Activated CD8-positive, alpha-beta memory T cell treated with anti-CD3 and anti-CD28 coated beads, Interleukin-2, amount 10 ng/mL, durations not matched to agents 7 days and 5 days (primary cell): ENCODE measurements at regions of chr3 and their contacts with region 1.

Region 1: GRCh38 chr3:58491506-58492402 is at the start of gene KCTD6:
- DNase-seq: peak; percentile 90
- ATAC-seq: peak; percentile 91
- H3K4me3 Mint-ChIP-seq: peak within 1 kb of the TSS; percentile 84
- H3K27ac Mint-ChIP-seq: peak within 1 kb of the TSS; percentile 81
- H3K4me1 Mint-ChIP-seq: peaks cover 33% of the 10 kb centered on the region
- H3K27me3 Mint-ChIP-seq: peaks cover 47% of the 10 kb centered on the region
- total RNA-seq, gene KCTD6: 6.4 to 7.0 TPM

Region 2: DNA sequence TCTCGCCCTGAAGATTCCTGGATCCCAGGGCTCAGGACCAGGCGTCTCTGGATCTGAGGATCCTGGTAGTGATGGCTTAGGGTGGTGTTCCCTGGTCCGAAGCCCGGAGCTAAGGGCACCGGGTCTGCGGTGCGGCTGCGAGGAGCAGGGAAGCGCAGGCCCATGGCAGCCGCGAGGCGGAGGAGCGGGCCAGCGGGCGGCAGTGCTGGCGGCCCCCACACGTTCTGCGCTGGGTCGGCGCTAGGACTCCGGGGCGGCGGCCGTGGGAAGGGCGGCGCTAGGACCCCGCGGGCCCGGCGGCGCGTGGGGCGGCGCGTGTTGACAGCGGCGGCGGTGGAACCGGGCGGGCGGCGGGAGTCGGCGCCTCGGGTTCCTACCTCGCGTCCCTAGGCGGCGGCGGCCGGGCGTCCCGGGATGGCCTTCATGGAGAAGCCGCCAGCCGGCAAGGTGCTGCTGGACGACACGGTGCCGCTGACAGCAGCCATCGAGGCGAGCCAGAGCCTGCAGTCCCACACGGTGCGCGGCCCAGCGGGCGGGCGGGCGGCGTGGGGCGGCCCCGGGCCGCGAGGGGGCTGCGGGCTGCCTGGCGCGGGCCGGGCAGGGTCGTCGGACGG is 159.1 kb before region 1 on chr3 and contains the start of gene PXK:
- CTCF ChIA-PET with region 1: interaction called, 33 read pairs
- DNase-seq: peak; percentile 84
- ATAC-seq: peak; percentile 89
- H3K4me3 Mint-ChIP-seq: peak within 1 kb of the TSS; percentile 95
- H3K27ac Mint-ChIP-seq: peak within 1 kb of the TSS; percentile 95
- H3K4me1 Mint-ChIP-seq: peaks cover 33% of the 10 kb centered on the region
- H3K27me3 Mint-ChIP-seq: no peaks in the 10 kb centered on the region
- total RNA-seq, gene PXK: 61.7 to 64.7 TPM

Region 3: GRCh38 chr3:58375254-58375653 is 116.5 kb before region 1 on chr3:
- CTCF ChIA-PET with region 1: no interaction called
- DNase-seq: no peak
- ATAC-seq: no peak
- H3K4me3 Mint-ChIP-seq: no peak overlapping the region
- H3K27ac Mint-ChIP-seq: no peak overlapping the region
- H3K4me1 Mint-ChIP-seq: no peaks in the 10 kb centered on the region
- H3K27me3 Mint-ChIP-seq: no peaks in the 10 kb centered on the region

Region 4: GRCh38 chr3:58463181-58463941 is 28.4 kb before region 1 on chr3:
- CTCF ChIA-PET with region 1: interaction called, 16 read pairs
- DNase-seq: peak; percentile 88
- ATAC-seq: peak; percentile 98
- H3K4me3 Mint-ChIP-seq: no peak overlapping the region
- H3K27ac Mint-ChIP-seq: no peak overlapping the region
- H3K4me1 Mint-ChIP-seq: peaks cover 14% of the 10 kb centered on the region
- H3K27me3 Mint-ChIP-seq: peaks cover 7% of the 10 kb centered on the region

Region 5: GRCh38 chr3:58471025-58471887 is 20.5 kb before region 1 on chr3:
- CTCF ChIA-PET with region 1: interaction called, 72 read pairs
- DNase-seq: peak; percentile 88
- ATAC-seq: peak; percentile 98
- H3K4me3 Mint-ChIP-seq: no peak overlapping the region
- H3K27ac Mint-ChIP-seq: peak overlapping the region; percentile 83
- H3K4me1 Mint-ChIP-seq: peaks cover 52% of the 10 kb centered on the region
- H3K27me3 Mint-ChIP-seq: peaks cover 15% of the 10 kb centered on the region